ENCODE measurements at regions of chr17 and their contacts with region 1.

Region 1: GRCh38 chr17:28644985-28645939 is at the start of gene BLTP2:
- DNase-seq: peak; percentile 85 to 93
- H3K4me3 ChIP-seq: peak within 1 kb of the TSS; percentile 91
- H3K27ac ChIP-seq: peak within 1 kb of the TSS; percentile 31; the same call in 1 of the 2 replicates
- H3K4me1 ChIP-seq: peaks cover 17% of the 10 kb centered on the region
- H3K27me3 ChIP-seq: no peaks in the 10 kb centered on the region
- CTCF ChIP-seq: no peak
- total RNA-seq, gene BLTP2: 161 and 204 TPM in 2 replicates

Region 2: GRCh38 chr17:28597606-28598383 is 47.5 kb before region 1 on chr17:
- CTCF ChIA-PET with region 1: no interaction called
- POLR2A ChIA-PET with region 1: no interaction called
- intact Hi-C with region 1: no loop called
- DNase-seq: peak in 1 of 2 experiments; percentile 36
- H3K4me3 ChIP-seq: peak overlapping the region; percentile 79
- H3K27ac ChIP-seq: peak overlapping the region; percentile 8; the same call in 1 of the 2 replicates
- H3K4me1 ChIP-seq: peaks cover 17% of the 10 kb centered on the region
- H3K27me3 ChIP-seq: no peaks in the 10 kb centered on the region
- CTCF ChIP-seq: no peak

Region 3: GRCh38 chr17:28661635-28662537 is 16.6 kb after region 1 on chr17 and contains the starts of genes SDF2 and SUPT6H:
- CTCF ChIA-PET with region 1: interaction called, 3 read pairs
- POLR2A ChIA-PET with region 1: interaction called, 3 read pairs
- intact Hi-C with region 1: loop called (anchors 2 kb)
- DNase-seq: peak; percentile 79 to 84
- H3K4me3 ChIP-seq: peak within 1 kb of the TSS; percentile 80
- H3K27ac ChIP-seq: peak within 1 kb of the TSS; percentile 78
- H3K4me1 ChIP-seq: peaks cover 17% of the 10 kb centered on the region
- H3K27me3 ChIP-seq: no peaks in the 10 kb centered on the region
- CTCF ChIP-seq: no peak
- total RNA-seq, gene SDF2: 38.9 and 43.7 TPM in 2 replicates
- total RNA-seq, gene SUPT6H: 46.7 and 63.3 TPM in 2 replicates

Region 4: GRCh38 chr17:28675980-28676379 is 30.7 kb after region 1 on chr17:
- CTCF ChIA-PET with region 1: interaction called, 14 read pairs
- POLR2A ChIA-PET with region 1: no interaction called
- intact Hi-C with region 1: no loop called
- DNase-seq: peak in 1 of 2 experiments; percentile 17
- H3K4me3 ChIP-seq: no peak overlapping the region
- H3K27ac ChIP-seq: no peak overlapping the region
- H3K4me1 ChIP-seq: no peaks in the 10 kb centered on the region
- H3K27me3 ChIP-seq: no peaks in the 10 kb centered on the region
- CTCF ChIP-seq: peak; percentile 72

Region 5: DNA sequence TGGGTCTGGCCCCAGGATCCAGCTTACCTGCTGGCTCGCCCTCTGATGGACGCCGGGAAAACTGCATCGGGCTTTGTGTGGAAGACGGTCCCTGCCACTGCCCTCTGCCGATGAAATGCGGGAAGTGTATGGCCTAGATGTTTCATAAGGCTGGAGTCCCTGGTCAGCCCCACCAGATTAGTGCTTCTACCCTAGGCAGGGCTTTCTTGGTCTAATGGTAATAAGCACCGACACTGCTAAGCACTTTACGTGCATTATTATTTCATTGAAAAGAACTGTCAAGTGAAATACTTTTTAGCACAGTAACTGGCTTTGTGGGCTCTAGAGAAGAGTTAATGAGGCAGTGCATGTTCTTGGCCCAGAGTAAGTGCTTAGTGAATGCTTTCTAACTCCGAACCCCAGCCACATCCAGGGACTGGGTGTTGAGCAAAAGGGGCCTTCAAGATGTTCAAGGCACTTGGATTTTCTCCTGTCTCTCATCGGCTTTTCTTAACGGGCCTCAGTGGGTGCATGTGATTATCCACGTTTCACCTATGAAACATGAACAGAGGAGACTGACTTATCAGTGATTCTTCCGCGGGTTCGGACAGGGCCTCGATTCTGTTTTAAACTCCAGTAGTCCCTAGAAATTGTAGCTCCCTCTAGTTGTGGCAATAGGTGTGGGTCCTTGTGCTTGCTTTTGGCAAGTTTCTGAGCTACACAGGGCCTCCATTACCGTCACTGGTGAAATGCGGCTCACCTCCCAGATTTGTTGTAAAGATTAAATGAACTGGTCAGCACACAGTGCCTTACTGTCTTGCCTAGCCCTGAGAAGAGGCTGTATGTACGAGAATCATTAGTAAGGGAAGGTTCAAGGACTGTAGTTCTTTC is 105.2 kb after region 1 on chr17:
- CTCF ChIA-PET with region 1: no interaction called
- POLR2A ChIA-PET with region 1: no interaction called
- intact Hi-C with region 1: loop called (anchors 5 kb)
- DNase-seq: peak; percentile 76 to 91
- H3K4me3 ChIP-seq: no peak overlapping the region
- H3K27ac ChIP-seq: no peak overlapping the region
- H3K4me1 ChIP-seq: peaks cover 43% of the 10 kb centered on the region
- H3K27me3 ChIP-seq: no peaks in the 10 kb centered on the region
- CTCF ChIP-seq: peak; percentile 98

Region 6: DNA sequence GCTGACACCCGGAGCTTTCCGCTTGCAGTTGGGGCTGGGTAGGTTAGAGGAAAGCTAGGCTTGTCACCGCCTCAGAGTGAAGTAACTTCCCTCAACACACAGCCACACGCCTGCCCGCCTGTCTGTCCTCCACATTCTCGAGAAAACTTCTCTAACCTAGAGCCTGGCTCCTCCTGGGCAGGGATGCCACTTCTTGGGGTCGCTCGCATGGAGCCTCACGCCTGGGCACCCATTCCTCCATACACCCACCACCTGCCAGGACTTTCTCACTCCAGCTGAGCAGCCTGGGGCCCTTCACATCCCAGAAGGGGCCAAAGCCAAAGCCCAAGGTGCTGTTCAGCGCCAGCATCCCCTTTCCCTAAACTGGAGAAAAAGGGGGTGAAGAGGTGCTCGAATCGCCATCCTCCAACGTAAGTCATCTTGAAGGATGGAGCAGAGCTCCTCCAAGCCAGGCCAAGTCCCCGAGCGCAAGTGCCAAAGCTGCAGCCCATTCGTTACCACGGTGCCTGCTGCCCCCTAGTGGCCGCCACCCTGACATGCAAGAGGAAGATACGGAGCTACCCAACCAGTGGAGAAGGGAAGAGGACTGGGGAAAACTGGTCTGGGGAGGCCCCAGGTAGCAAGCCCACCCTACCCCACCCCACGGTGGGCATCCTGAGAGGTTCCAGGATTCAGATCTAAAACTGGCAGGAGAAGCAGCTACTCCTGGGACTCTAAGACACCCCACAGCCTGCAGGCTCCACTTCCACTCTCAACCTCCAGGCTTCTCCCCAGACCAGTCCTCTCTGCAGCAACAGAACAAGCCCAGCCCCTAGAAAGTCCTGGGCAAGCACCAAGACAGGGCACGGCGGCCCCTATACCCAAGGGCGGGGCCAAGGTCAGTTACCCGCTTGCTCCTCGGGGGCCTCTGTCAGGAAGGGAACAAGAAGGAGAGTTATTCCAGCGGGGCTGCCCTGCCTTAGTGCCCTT is 471.8 kb after region 1 on chr17:
- CTCF ChIA-PET with region 1: interaction called, 3 read pairs
- POLR2A ChIA-PET with region 1: no interaction called
- intact Hi-C with region 1: loop called (anchors 5 kb)
- DNase-seq: peak; percentile 47 to 62
- H3K4me3 ChIP-seq: no peak overlapping the region
- H3K27ac ChIP-seq: no peak overlapping the region
- H3K4me1 ChIP-seq: no peaks in the 10 kb centered on the region
- H3K27me3 ChIP-seq: no peaks in the 10 kb centered on the region
- CTCF ChIP-seq: peak; percentile 97

Measured in PC-9 (cell line).